ENCODE measurements at regions of chr22 and their contacts with region 1.

Region 1: GRCh38 chr22:25172153-25172552 is 27.5 kb upstream of the CRYBB3 start:
- DNase-seq: no peak
- H3K4me3 ChIP-seq: no peak overlapping the region
- H3K27ac ChIP-seq: no peak overlapping the region
- H3K4me1 ChIP-seq: peaks cover 16% of the 10 kb centered on the region
- H3K27me3 ChIP-seq: no peaks in the 10 kb centered on the region
- CTCF ChIP-seq: peak; percentile 33 to 71

Region 2: DNA sequence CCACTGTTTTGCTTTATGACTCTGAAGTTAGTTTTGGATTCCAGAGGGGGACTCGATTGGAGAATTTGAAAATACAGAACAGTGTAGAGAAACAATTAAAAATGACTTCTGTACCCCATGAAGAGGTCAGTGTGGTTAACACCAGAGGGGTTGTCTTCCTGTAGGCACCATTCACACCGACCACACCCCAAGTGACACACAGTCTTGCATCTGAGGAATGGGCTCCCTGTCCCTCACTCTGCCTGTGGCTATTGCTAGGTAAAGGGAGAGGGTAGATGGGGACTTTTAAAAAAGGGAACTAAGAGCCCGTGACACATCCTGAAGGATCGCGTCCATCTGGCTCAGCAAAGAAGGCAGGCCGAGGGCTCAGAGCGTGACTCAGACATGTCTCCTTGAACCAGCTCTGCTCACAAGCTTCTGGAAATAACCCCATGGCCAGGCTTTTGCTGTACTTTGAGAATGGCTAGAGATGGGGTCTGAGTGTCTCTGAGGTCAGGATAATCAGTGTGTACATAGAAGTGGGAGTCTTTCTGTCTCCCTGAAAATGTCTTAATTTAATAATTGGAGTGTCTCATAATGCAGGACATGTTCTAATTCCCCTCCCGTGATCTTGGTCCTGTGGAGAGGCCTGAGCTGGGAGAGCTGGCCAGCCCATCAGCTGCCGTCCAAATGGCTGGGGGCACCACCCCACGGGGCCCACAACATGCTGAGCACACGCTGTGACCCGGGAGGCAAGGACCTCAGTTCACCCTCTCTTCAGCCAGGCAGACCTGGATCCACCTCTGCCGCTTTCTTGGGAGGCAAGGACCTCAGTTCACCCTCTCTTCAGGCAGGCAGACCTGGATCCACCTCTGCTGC is 326.9 kb before region 1 on chr22:
- CTCF ChIA-PET with region 1: no interaction called
- dilution Hi-C with region 1: no loop called
- in situ Hi-C with region 1: no loop called
- intact Hi-C with region 1: no loop called
- DNase-seq: no peak
- H3K4me3 ChIP-seq: no peak overlapping the region
- H3K27ac ChIP-seq: no peak overlapping the region
- H3K4me1 ChIP-seq: peaks cover 4% of the 10 kb centered on the region
- H3K27me3 ChIP-seq: no peaks in the 10 kb centered on the region
- CTCF ChIP-seq: no peak

Region 3: GRCh38 chr22:24938741-24939341 is 233.3 kb before region 1 on chr22:
- CTCF ChIA-PET with region 1: no interaction called
- dilution Hi-C with region 1: no loop called
- in situ Hi-C with region 1: no loop called
- intact Hi-C with region 1: loop called (anchors 10 kb)
- DNase-seq: peak; percentile 48
- H3K4me3 ChIP-seq: no peak overlapping the region
- H3K27ac ChIP-seq: no peak overlapping the region
- H3K4me1 ChIP-seq: peaks cover 17% of the 10 kb centered on the region
- H3K27me3 ChIP-seq: no peaks in the 10 kb centered on the region
- CTCF ChIP-seq: peak; percentile 70 to 76

Region 4: DNA sequence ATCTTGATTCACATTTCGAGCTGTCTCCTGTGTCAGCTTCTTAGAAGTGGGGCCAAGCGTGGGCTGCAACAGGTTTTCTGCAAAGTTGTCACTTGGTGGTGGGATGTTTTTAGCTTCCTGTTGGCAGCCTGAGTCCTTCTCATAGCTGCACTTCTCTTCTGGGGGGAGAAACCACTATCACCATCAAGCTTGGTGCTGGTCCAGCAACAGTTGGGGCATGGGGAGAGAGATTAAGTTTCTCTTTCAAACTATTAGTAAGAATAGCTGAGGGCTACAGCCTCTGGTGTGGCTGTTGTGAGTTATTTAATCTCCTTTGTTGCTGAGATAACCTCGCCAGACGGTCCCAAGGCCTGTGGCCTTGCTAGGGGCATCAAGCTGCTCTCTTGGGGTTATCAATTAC is 95.8 kb before region 1 on chr22:
- CTCF ChIA-PET with region 1: no interaction called
- dilution Hi-C with region 1: loop called (anchors 5 kb)
- in situ Hi-C with region 1: no loop called
- intact Hi-C with region 1: loop called (anchors 1 kb)
- DNase-seq: no peak
- H3K4me3 ChIP-seq: no peak overlapping the region
- H3K27ac ChIP-seq: no peak overlapping the region
- H3K4me1 ChIP-seq: no peaks in the 10 kb centered on the region
- H3K27me3 ChIP-seq: no peaks in the 10 kb centered on the region
- CTCF ChIP-seq: no peak

Region 5: DNA sequence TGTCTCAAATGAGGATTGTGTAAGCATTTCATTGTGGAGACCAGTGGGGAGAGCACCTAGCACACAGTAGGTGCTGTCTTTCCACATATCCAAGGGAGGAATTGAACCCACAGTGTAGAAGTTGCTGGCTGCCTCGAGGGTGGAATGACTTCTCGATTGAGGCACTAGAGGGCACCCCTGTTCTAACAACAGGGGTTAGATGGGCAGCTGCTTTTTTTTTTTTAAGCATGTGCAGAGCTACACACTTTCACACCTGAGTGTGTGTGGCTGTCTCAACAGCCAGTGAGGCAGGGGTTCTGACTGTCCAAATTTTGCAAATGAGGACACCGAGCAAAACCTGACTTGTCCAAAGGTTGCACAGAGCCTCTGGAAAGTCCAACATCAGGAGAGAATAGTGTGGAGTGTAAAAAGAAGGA is 90.7 kb before region 1 on chr22:
- CTCF ChIA-PET with region 1: no interaction called
- dilution Hi-C with region 1: loop called (anchors 5 kb)
- in situ Hi-C with region 1: no loop called
- intact Hi-C with region 1: loop called (anchors 1 kb)
- DNase-seq: peak; percentile 14
- H3K4me3 ChIP-seq: no peak overlapping the region
- H3K27ac ChIP-seq: no peak overlapping the region
- H3K4me1 ChIP-seq: peaks cover 8% of the 10 kb centered on the region
- H3K27me3 ChIP-seq: no peaks in the 10 kb centered on the region
- CTCF ChIP-seq: peak; percentile 45 to 61

Region 6: DNA sequence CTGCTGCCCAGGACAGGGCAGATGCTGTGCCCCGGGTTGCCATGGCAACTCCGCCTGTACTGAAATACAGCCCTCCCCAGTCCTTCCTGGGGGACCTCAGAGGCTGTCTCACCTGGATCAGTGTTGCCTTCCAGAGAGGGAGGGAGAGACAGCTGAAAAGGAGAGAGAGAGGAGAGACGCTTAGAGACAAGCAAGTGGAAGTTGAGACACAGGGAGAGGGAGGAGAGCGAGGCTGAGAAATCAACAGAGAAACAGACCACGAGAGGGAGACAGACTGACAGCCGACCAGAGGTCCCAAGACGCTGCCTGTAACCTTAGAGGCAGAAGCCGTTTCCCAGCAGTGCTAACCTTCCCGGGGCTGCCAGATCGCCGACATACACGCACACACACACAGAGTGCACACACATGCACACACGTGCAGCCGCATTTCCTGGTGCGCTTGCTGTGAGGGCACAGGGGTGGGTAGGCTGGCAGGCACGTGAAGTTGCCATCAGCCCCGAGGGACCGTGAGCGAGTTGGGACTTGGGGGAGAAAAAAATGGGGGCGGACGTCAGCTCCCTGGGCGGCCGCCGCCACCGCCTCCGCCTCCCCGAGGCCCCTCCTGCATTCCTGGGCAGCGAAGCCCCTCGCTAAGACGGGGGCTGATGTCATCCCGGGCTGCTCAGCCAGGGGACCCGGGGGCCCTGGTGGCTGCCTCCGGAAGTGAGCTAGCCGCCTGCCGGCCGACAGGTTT is 61.1 kb before region 1 on chr22:
- CTCF ChIA-PET with region 1: interaction called, 3 read pairs
- dilution Hi-C with region 1: no loop called
- in situ Hi-C with region 1: no loop called
- intact Hi-C with region 1: loop called (anchors 1 kb)
- DNase-seq: peak; percentile 87
- H3K4me3 ChIP-seq: peak overlapping the region; percentile 33 to 64 (median 57)
- H3K27ac ChIP-seq: peak overlapping the region; percentile 90
- H3K4me1 ChIP-seq: peaks cover 53% of the 10 kb centered on the region
- H3K27me3 ChIP-seq: no peaks in the 10 kb centered on the region
- CTCF ChIP-seq: peak; percentile 32 to 69

Region 7: DNA sequence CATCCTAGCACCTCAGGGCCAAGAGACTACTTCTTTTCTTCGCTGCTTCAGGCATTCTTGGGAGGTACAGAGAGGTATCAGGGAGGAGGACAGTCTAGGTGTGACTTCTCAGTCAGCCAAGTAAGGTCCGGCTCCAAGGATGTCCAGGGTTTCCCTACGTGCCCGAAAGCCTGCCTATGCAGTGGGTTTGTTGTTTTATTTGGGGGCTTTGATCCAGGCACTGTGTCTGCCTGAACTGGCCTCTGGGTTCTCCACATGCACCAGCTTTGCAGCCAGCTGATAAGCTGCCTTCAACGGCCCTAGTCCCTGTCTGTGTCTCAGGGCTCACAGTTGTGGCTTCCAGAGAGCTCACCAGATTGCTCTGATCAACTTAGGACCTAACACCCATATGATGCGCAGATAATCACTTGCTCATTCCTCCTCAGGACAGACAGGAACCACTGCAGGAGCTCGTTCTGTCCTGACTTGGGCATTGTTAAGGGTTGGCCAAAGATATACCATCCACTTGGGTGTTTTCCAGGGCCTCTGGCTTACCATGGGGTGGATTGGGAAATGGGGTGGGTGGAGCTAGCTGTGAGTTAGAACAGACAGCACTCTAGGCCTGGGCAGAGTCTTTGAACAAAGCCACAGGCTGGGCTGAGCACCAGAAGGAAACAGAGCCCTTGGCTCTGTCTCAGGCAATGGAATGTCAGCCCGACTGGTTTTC is 18.0 kb before region 1 on chr22:
- CTCF ChIA-PET with region 1: no interaction called
- dilution Hi-C with region 1: no loop called
- in situ Hi-C with region 1: no loop called
- intact Hi-C with region 1: no loop called
- DNase-seq: peak; percentile 92
- H3K4me3 ChIP-seq: no peak overlapping the region
- H3K27ac ChIP-seq: peak overlapping the region; percentile 23
- H3K4me1 ChIP-seq: peaks cover 20% of the 10 kb centered on the region
- H3K27me3 ChIP-seq: no peaks in the 10 kb centered on the region
- CTCF ChIP-seq: no peak

Region 8: GRCh38 chr22:25228822-25229221 is 56.7 kb after region 1 on chr22:
- CTCF ChIA-PET with region 1: no interaction called
- dilution Hi-C with region 1: loop called (anchors 5 kb)
- in situ Hi-C with region 1: no loop called
- intact Hi-C with region 1: no loop called
- DNase-seq: no peak
- H3K4me3 ChIP-seq: no peak overlapping the region
- H3K27ac ChIP-seq: no peak overlapping the region
- H3K4me1 ChIP-seq: no peaks in the 10 kb centered on the region
- H3K27me3 ChIP-seq: no peaks in the 10 kb centered on the region
- CTCF ChIP-seq: no peak

Region 9: GRCh38 chr22:25346859-25347751 is 175.0 kb after region 1 on chr22:
- CTCF ChIA-PET with region 1: no interaction called
- dilution Hi-C with region 1: no loop called
- in situ Hi-C with region 1: no loop called
- intact Hi-C with region 1: no loop called
- DNase-seq: no peak
- H3K4me3 ChIP-seq: no peak overlapping the region
- H3K27ac ChIP-seq: no peak overlapping the region
- H3K4me1 ChIP-seq: no peaks in the 10 kb centered on the region
- H3K27me3 ChIP-seq: no peaks in the 10 kb centered on the region
- CTCF ChIP-seq: no peak

Measured in mammary epithelial cell (primary cell).